Ovary (tissue), 10 donors: ENCODE measurements at regions of chr4 and their contacts with region 1.

Region 1: GRCh38 chr4:183763990-183764754 is 105.1 kb downstream of the TRAPPC11 start:
- DNase-seq: no peak
- H3K4me3 ChIP-seq: no peak overlapping the region
- H3K27ac ChIP-seq: no peak overlapping the region
- H3K4me1 ChIP-seq: no peaks in the 10 kb centered on the region
- H3K27me3 ChIP-seq: no peaks in the 10 kb centered on the region
- CTCF ChIP-seq: no peak
- EP300 ChIP-seq: no peak
- POLR2A ChIP-seq: no peak

Region 2: DNA sequence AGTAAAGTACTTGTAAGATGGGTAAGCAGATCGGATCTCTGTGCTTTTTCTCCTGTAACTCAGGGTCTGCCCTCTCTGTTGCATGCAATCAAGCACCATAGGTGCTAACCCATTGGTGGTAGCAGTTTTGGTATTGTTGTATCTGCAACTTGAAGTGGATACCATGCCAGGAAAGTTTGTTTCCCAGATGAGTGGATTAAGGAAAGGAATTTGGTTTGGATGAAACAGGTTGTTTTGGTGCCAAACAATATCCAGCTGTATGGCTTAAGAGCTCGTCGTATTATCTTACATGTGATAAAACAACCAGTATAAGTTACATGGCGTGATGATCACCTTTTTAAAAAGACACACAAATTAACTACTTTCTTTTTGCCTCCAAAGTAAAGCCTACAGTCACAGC is 1801.9 kb before region 1 on chr4:
- intact Hi-C with region 1: loop called in 1 of 4 experiments (anchors 5 kb)
- DNase-seq: no peak
- H3K4me3 ChIP-seq: no peak overlapping the region
- H3K27ac ChIP-seq: no peak overlapping the region
- H3K4me1 ChIP-seq: no peaks in the 10 kb centered on the region
- H3K27me3 ChIP-seq: no peaks in the 10 kb centered on the region
- CTCF ChIP-seq: no peak
- EP300 ChIP-seq: no peak
- POLR2A ChIP-seq: no peak